GM12878 (cell line): ENCODE measurements at regions of chr9 and their contacts with region 1.

Region 1: DNA sequence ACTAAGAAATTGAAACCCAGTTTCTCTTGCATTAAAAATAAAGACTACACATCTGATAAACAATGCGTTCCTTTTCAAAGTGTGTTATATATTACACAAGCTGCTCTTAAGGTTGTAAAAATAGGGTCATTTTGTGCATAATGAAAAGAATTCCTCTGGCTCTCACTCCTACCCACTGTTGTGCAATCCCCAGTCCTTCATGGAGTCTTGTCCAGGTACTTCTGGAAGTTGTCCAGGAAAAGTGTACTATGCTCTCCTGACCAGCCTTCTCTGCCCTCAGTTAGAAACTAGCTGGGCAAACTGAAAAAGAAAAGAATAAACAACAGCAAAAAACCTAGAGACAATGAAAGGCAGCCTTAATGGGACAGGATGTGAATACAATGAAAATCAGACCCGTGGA is 345.5 kb upstream of the PAPPA start:
- DNase-seq: no peak
- ATAC-seq: no peak
- H3K4me3 ChIP-seq: no peak overlapping the region
- H3K27ac ChIP-seq: no peak overlapping the region
- H3K4me1 ChIP-seq: no peaks in the 10 kb centered on the region
- H3K27me3 ChIP-seq: no peaks in the 10 kb centered on the region
- CTCF ChIP-seq: no peak
- EP300 ChIP-seq: no peak
- POLR2A ChIP-seq: no peak
- RAD21 ChIP-seq: no peak

Region 2: DNA sequence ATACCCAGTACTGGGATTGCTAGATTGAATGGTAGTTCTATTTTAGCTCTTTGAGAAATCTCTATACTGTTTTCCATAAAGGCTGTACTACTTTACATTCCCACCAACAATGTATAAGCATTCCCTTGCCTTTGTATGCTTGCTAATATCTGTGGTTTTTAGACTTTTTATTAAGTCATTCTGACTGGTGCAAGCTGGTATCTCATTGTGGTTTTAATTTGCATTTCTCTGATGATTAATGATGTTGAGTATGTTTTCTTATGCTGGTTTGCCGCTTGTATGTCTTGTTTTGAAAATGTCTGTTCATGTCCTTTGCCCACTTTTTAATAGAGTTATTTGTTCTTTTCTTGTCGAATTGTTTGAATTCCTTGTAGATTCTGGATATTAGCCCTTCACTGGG is 167.2 kb before region 1 on chr9:
- CTCF ChIA-PET with region 1: no interaction called
- POLR2A ChIA-PET with region 1: no interaction called
- RAD21 ChIA-PET with region 1: no interaction called
- SMC1A ChIA-PET with region 1: no interaction called
- in situ Hi-C with region 1: no loop called
- intact Hi-C with region 1: no loop called
- DNase-seq: no peak
- ATAC-seq: no peak
- H3K4me3 ChIP-seq: no peak overlapping the region
- H3K27ac ChIP-seq: no peak overlapping the region
- H3K4me1 ChIP-seq: no peaks in the 10 kb centered on the region
- H3K27me3 ChIP-seq: no peaks in the 10 kb centered on the region
- CTCF ChIP-seq: no peak
- EP300 ChIP-seq: no peak
- POLR2A ChIP-seq: no peak
- RAD21 ChIP-seq: no peak

Region 3: GRCh38 chr9:115680231-115680630 is 127.9 kb before region 1 on chr9:
- CTCF ChIA-PET with region 1: no interaction called
- POLR2A ChIA-PET with region 1: no interaction called
- RAD21 ChIA-PET with region 1: no interaction called
- SMC1A ChIA-PET with region 1: no interaction called
- in situ Hi-C with region 1: no loop called
- intact Hi-C with region 1: no loop called
- DNase-seq: no peak
- ATAC-seq: no peak
- H3K4me3 ChIP-seq: no peak overlapping the region
- H3K27ac ChIP-seq: no peak overlapping the region
- H3K4me1 ChIP-seq: no peaks in the 10 kb centered on the region
- H3K27me3 ChIP-seq: no peaks in the 10 kb centered on the region
- CTCF ChIP-seq: no peak
- EP300 ChIP-seq: no peak
- POLR2A ChIP-seq: no peak
- RAD21 ChIP-seq: no peak

Region 4: GRCh38 chr9:115864581-115864980 is 56.5 kb after region 1 on chr9:
- CTCF ChIA-PET with region 1: no interaction called
- POLR2A ChIA-PET with region 1: no interaction called
- RAD21 ChIA-PET with region 1: no interaction called
- SMC1A ChIA-PET with region 1: no interaction called
- in situ Hi-C with region 1: no loop called
- intact Hi-C with region 1: loop called (anchors 10 kb)
- DNase-seq: no peak
- ATAC-seq: no peak
- H3K4me3 ChIP-seq: no peak overlapping the region
- H3K27ac ChIP-seq: no peak overlapping the region
- H3K4me1 ChIP-seq: no peaks in the 10 kb centered on the region
- H3K27me3 ChIP-seq: no peaks in the 10 kb centered on the region
- CTCF ChIP-seq: no peak
- EP300 ChIP-seq: no peak
- POLR2A ChIP-seq: no peak
- RAD21 ChIP-seq: no peak

Region 5: GRCh38 chr9:115978659-115979096 is 170.6 kb after region 1 on chr9:
- CTCF ChIA-PET with region 1: no interaction called
- POLR2A ChIA-PET with region 1: no interaction called
- RAD21 ChIA-PET with region 1: no interaction called
- SMC1A ChIA-PET with region 1: no interaction called
- in situ Hi-C with region 1: no loop called
- intact Hi-C with region 1: no loop called
- DNase-seq: no peak
- ATAC-seq: no peak
- H3K4me3 ChIP-seq: no peak overlapping the region
- H3K27ac ChIP-seq: no peak overlapping the region
- H3K4me1 ChIP-seq: no peaks in the 10 kb centered on the region
- H3K27me3 ChIP-seq: no peaks in the 10 kb centered on the region
- CTCF ChIP-seq: no peak
- EP300 ChIP-seq: no peak
- POLR2A ChIP-seq: no peak
- RAD21 ChIP-seq: no peak

Region 6: GRCh38 chr9:115992834-115993233 is 184.7 kb after region 1 on chr9:
- CTCF ChIA-PET with region 1: no interaction called
- POLR2A ChIA-PET with region 1: no interaction called
- RAD21 ChIA-PET with region 1: no interaction called
- SMC1A ChIA-PET with region 1: no interaction called
- in situ Hi-C with region 1: no loop called
- intact Hi-C with region 1: no loop called
- DNase-seq: no peak
- ATAC-seq: no peak
- H3K4me3 ChIP-seq: no peak overlapping the region
- H3K27ac ChIP-seq: no peak overlapping the region
- H3K4me1 ChIP-seq: no peaks in the 10 kb centered on the region
- H3K27me3 ChIP-seq: no peaks in the 10 kb centered on the region
- CTCF ChIP-seq: no peak
- EP300 ChIP-seq: no peak
- POLR2A ChIP-seq: no peak
- RAD21 ChIP-seq: no peak